ENCODE measurements at regions of chr4 and their contacts with region 1.

Region 1: DNA sequence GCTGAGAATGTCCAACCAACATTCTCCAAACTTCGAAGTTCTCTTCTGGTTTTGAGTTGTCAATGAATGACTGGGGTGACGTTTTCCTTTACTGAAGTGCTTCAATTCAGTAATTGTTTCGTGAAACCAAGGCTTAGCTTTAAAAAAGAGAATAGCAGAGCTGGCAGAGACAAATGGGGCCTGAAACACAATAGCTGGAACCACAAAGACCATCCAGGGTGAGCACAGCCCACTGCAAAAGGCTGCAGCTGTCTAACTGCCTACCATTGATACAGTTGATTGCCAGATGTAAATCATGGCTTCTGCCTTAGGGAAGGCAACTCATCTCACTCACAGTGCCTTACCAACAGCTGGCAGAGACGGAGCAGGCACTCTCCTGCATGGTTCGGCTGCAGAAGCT is 78.7 kb upstream of the ZNF518B start:
- DNase-seq: no peak
- ATAC-seq: no peak
- H3K4me3 ChIP-seq: no peak overlapping the region
- H3K4me3 Mint-ChIP-seq: no peak overlapping the region
- H3K27ac ChIP-seq: no peak overlapping the region
- H3K27ac Mint-ChIP-seq: no peak overlapping the region
- H3K4me1 ChIP-seq: no peaks in the 10 kb centered on the region
- H3K4me1 Mint-ChIP-seq: no peaks in the 10 kb centered on the region
- H3K27me3 ChIP-seq: no peaks in the 10 kb centered on the region
- H3K27me3 Mint-ChIP-seq: no peaks in the 10 kb centered on the region
- CTCF ChIP-seq: no peak

Region 2: DNA sequence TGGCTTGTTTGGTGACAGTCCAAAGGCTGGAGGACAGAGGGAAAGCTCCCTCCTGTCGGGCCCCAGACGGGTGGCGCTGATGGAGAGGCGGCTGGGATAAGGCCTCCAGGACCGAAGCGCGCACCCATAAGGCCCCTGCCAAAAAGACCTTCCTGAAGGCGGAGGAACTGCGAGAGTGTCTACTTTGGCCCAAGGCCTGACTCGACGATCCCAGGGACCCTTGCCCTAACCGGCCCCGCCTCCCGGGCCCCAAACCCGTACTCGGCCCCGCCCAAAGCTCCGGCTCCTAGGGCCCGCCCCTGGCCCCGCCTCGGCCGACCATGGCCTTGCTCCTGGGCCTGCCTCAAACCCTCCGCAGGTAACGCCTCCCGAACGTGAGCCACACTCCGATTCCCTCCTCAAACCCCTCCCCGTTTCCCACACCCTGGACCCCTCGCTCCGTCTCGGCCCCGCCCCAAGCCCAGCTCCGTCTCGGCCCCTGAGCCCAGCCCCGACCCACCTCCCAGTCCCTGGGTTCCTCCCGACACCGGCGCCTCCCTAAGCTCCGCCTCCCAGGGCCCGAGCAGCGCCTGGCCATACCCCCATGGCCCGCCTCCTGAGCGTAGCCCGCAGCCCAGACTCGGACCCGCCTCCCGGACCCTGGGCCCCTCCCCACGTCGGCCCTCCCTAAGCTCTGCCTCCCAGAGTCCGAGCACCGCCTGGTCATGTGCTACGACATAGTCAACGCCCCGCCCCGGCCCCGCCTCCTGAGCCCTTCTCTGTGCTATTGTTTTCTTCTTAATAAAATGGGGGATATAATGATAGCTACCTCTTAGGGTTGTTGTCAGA is 844.5 kb before region 1 on chr4:
- CTCF ChIA-PET with region 1: no interaction called
- POLR2A ChIA-PET with region 1: no interaction called
- intact Hi-C with region 1: loop called (anchors 5 to 10 kb)
- DNase-seq: peak; percentile 77 to 97 (median 88)
- ATAC-seq: peak; percentile 99
- H3K4me3 ChIP-seq: peak overlapping the region; percentile 72
- H3K4me3 Mint-ChIP-seq: peak overlapping the region; percentile 92
- H3K27ac ChIP-seq: peak overlapping the region; percentile 67 to 73
- H3K27ac Mint-ChIP-seq: peak overlapping the region; percentile 85
- H3K4me1 ChIP-seq: peaks cover 8% of the 10 kb centered on the region
- H3K4me1 Mint-ChIP-seq: peaks cover 26% of the 10 kb centered on the region
- H3K27me3 ChIP-seq: no peaks in the 10 kb centered on the region
- H3K27me3 Mint-ChIP-seq: no peaks in the 10 kb centered on the region
- CTCF ChIP-seq: no peak

Region 3: DNA sequence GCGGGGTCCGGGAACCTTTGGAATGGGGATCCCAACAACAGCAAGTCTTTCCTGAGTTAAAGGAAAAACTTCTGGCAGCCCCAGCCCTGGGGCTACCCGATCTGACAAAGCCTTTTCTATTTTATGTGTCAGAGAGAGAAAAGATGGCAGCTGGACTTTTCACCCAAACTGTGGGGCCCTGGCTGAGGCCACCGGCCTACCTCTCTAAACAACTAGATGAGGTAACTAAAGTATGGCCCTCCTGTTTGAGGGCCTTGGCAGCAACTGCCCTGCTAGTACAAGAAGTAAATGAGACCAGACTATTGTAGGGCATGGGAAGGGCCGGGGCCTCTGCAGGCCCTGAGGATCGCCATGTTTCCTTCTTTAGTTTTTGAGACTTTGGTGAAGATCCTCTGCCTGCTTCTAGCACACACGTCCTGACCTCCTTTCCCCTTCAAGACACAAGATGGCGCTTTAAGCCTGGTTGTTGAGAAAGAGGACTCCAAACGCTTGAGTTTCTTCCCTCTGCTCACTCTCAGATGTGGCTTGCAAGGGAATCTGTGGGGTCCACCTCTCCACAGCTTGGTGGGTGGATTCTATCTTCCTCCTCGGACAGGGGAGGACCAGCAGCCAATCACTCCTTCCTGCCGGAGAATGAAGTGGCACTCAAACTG is 773.0 kb before region 1 on chr4:
- CTCF ChIA-PET with region 1: no interaction called
- POLR2A ChIA-PET with region 1: no interaction called
- intact Hi-C with region 1: loop called in 1 of 2 experiments (anchors 2 kb)
- DNase-seq: peak in 6 of 14 experiments; percentile 13 to 65 (median 32)
- ATAC-seq: no peak
- H3K4me3 ChIP-seq: no peak overlapping the region
- H3K4me3 Mint-ChIP-seq: no peak overlapping the region
- H3K27ac ChIP-seq: no peak overlapping the region
- H3K27ac Mint-ChIP-seq: no peak overlapping the region
- H3K4me1 ChIP-seq: no peaks in the 10 kb centered on the region
- H3K4me1 Mint-ChIP-seq: no peaks in the 10 kb centered on the region
- H3K27me3 ChIP-seq: no peaks in the 10 kb centered on the region
- H3K27me3 Mint-ChIP-seq: peaks cover 20% of the 10 kb centered on the region
- CTCF ChIP-seq: peak; percentile 34

Region 4: GRCh38 chr4:10157478-10158332 is 378.2 kb before region 1 on chr4:
- CTCF ChIA-PET with region 1: interaction called, 3 read pairs
- POLR2A ChIA-PET with region 1: no interaction called
- intact Hi-C with region 1: loop called (anchors 1 to 2 kb)
- DNase-seq: peak in 9 of 14 experiments; percentile 4 to 68 (median 40)
- ATAC-seq: peak; percentile 38
- H3K4me3 ChIP-seq: no peak overlapping the region
- H3K4me3 Mint-ChIP-seq: no peak overlapping the region
- H3K27ac ChIP-seq: no peak overlapping the region
- H3K27ac Mint-ChIP-seq: peak overlapping the region; percentile 65
- H3K4me1 ChIP-seq: peaks cover 36% of the 10 kb centered on the region
- H3K4me1 Mint-ChIP-seq: peaks cover 37% of the 10 kb centered on the region
- H3K27me3 ChIP-seq: no peaks in the 10 kb centered on the region
- H3K27me3 Mint-ChIP-seq: no peaks in the 10 kb centered on the region
- CTCF ChIP-seq: peak; percentile 67

Region 5: GRCh38 chr4:10164877-10165283 is 371.0 kb before region 1 on chr4:
- CTCF ChIA-PET with region 1: interaction called, 3 read pairs
- POLR2A ChIA-PET with region 1: no interaction called
- intact Hi-C with region 1: loop called in 1 of 2 experiments (anchors 2 kb)
- DNase-seq: peak in 1 of 14 experiments; percentile 19
- ATAC-seq: no peak
- H3K4me3 ChIP-seq: no peak overlapping the region
- H3K4me3 Mint-ChIP-seq: no peak overlapping the region
- H3K27ac ChIP-seq: no peak overlapping the region
- H3K27ac Mint-ChIP-seq: no peak overlapping the region
- H3K4me1 ChIP-seq: peaks cover 32% of the 10 kb centered on the region
- H3K4me1 Mint-ChIP-seq: peaks cover 21% of the 10 kb centered on the region
- H3K27me3 ChIP-seq: no peaks in the 10 kb centered on the region
- H3K27me3 Mint-ChIP-seq: no peaks in the 10 kb centered on the region
- CTCF ChIP-seq: peak; percentile 61

Region 6: GRCh38 chr4:10461091-10461849 is 74.6 kb before region 1 on chr4:
- CTCF ChIA-PET with region 1: interaction called, 5 read pairs
- POLR2A ChIA-PET with region 1: interaction called, 3 read pairs
- intact Hi-C with region 1: loop called (anchors 1 to 5 kb)
- DNase-seq: peak; percentile 41 to 93 (median 70)
- ATAC-seq: peak; percentile 83
- H3K4me3 ChIP-seq: peak overlapping the region; percentile 62
- H3K4me3 Mint-ChIP-seq: peak overlapping the region; percentile 83
- H3K27ac ChIP-seq: no peak overlapping the region
- H3K27ac Mint-ChIP-seq: no peak overlapping the region
- H3K4me1 ChIP-seq: peaks cover 32% of the 10 kb centered on the region
- H3K4me1 Mint-ChIP-seq: peaks cover 26% of the 10 kb centered on the region
- H3K27me3 ChIP-seq: peaks cover 12 to 14% of the 10 kb centered on the region in 2 experiments
- H3K27me3 Mint-ChIP-seq: peaks cover 41% of the 10 kb centered on the region
- CTCF ChIP-seq: peak; percentile 95

Measured in CD4-positive, alpha-beta T cell (primary cell).